PC-9 (cell line): ENCODE measurements at regions of chr5 and their contacts with region 1.

Region 1: GRCh38 chr5:142548739-142549275 is 137.1 kb downstream of the FGF1 start:
- DNase-seq: peak; percentile 73 to 80
- H3K4me3 ChIP-seq: no peak overlapping the region
- H3K27ac ChIP-seq: peak overlapping the region; percentile 48
- H3K4me1 ChIP-seq: peaks cover 43% of the 10 kb centered on the region
- H3K27me3 ChIP-seq: no peaks in the 10 kb centered on the region
- CTCF ChIP-seq: peak; percentile 93

Region 2: GRCh38 chr5:141681695-141682641 is 866.8 kb before region 1 on chr5 and contains the start of gene ARAP3:
- CTCF ChIA-PET with region 1: no interaction called
- POLR2A ChIA-PET with region 1: no interaction called
- intact Hi-C with region 1: loop called (anchors 10 kb)
- DNase-seq: peak; percentile 74 to 84
- H3K4me3 ChIP-seq: peak within 1 kb of the TSS; percentile 68
- H3K27ac ChIP-seq: peak within 1 kb of the TSS; percentile 89
- H3K4me1 ChIP-seq: peaks cover 22% of the 10 kb centered on the region
- H3K27me3 ChIP-seq: no peaks in the 10 kb centered on the region
- CTCF ChIP-seq: no peak
- total RNA-seq, gene ARAP3: 25.8 and 28.0 TPM in 2 replicates

Region 3: GRCh38 chr5:142151436-142152383 is 397.1 kb before region 1 on chr5:
- CTCF ChIA-PET with region 1: interaction called, 3 read pairs
- POLR2A ChIA-PET with region 1: no interaction called
- intact Hi-C with region 1: loop called (anchors 1 kb)
- DNase-seq: peak; percentile 48 to 49
- H3K4me3 ChIP-seq: no peak overlapping the region
- H3K27ac ChIP-seq: no peak overlapping the region
- H3K4me1 ChIP-seq: peaks cover 9% of the 10 kb centered on the region; the same call in 1 of the 2 replicates
- H3K27me3 ChIP-seq: no peaks in the 10 kb centered on the region
- CTCF ChIP-seq: peak; percentile 92

Region 4: DNA sequence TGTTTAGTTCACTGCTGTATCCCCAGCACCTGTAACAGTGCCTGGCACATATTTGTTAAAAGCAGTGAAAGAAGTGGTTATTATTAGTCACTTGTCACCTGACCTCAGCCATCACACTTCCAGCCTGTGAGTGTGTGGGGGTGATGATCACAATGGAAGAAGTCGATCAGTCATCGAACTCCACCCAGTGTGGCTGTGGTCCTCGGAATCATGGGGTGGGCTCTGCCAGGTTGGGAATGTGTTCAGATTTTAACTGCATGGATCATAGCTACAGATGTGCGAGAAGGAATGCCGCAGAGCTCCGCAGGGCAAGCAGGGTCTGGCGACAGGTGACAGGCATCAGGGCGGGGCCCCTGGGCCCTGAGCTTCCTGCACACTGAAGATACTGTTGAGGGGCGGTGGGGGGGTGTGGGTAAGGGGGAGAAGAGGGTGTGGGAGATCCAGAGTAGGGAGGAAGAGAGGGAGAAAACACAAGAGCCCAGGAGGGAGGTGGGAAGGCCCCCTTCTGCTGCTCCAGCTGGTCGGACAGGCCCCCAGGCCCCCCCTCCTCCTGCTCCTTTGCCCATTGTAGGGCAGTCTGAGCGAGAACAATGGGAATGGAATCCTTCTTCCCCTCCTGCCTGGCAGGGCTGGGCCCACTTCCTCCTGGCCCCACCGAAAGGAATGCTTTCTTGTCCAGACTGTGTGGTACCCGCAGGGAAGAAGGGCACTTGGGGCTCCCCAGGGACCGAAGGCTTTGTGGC is 313.6 kb before region 1 on chr5:
- CTCF ChIA-PET with region 1: no interaction called
- POLR2A ChIA-PET with region 1: no interaction called
- intact Hi-C with region 1: loop called (anchors 5 kb)
- DNase-seq: peak; percentile 57 to 82
- H3K4me3 ChIP-seq: peak overlapping the region; percentile 17; the same call in 1 of the 2 replicates
- H3K27ac ChIP-seq: no peak overlapping the region; the same call in 1 of the 2 replicates
- H3K4me1 ChIP-seq: peaks cover 45% of the 10 kb centered on the region
- H3K27me3 ChIP-seq: no peaks in the 10 kb centered on the region
- CTCF ChIP-seq: no peak

Region 5: GRCh38 chr5:142446131-142446959 is 102.5 kb before region 1 on chr5:
- CTCF ChIA-PET with region 1: no interaction called
- POLR2A ChIA-PET with region 1: no interaction called
- intact Hi-C with region 1: loop called (anchors 2 kb)
- DNase-seq: peak; percentile 32 to 90
- H3K4me3 ChIP-seq: peak overlapping the region; percentile 33; the same call in 1 of the 2 replicates
- H3K27ac ChIP-seq: peak overlapping the region; percentile 99
- H3K4me1 ChIP-seq: peaks cover 57% of the 10 kb centered on the region
- H3K27me3 ChIP-seq: no peaks in the 10 kb centered on the region
- CTCF ChIP-seq: no peak

Region 6: DNA sequence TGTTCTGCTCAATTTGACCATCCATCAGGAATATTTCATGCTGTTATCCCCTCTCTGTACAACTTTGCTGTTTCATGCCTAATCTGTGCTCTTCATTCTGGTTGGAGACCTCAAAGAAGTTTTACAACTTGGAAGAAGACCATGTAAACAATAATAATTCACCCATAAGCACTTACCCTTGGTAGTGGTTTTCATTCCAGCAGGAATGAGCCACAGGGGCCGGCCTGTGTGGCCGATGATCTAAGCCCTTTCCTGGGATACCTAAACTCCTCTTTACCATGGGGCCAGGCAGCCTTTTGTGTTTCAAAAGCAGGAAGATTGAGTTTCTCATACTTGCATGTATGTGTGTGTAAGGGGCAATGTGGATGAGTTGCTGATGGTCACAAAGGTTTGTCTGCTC is 27.9 kb before region 1 on chr5:
- CTCF ChIA-PET with region 1: no interaction called
- POLR2A ChIA-PET with region 1: no interaction called
- intact Hi-C with region 1: no loop called
- DNase-seq: no peak
- H3K4me3 ChIP-seq: no peak overlapping the region
- H3K27ac ChIP-seq: peak overlapping the region; percentile 22; the same call in 1 of the 2 replicates
- H3K4me1 ChIP-seq: peaks cover 12% of the 10 kb centered on the region
- H3K27me3 ChIP-seq: no peaks in the 10 kb centered on the region
- CTCF ChIP-seq: no peak

Region 7: GRCh38 chr5:142587354-142587965 is 38.7 kb after region 1 on chr5:
- CTCF ChIA-PET with region 1: no interaction called
- POLR2A ChIA-PET with region 1: no interaction called
- intact Hi-C with region 1: no loop called
- DNase-seq: peak; percentile 8 to 45
- H3K4me3 ChIP-seq: no peak overlapping the region
- H3K27ac ChIP-seq: no peak overlapping the region
- H3K4me1 ChIP-seq: no peaks in the 10 kb centered on the region
- H3K27me3 ChIP-seq: no peaks in the 10 kb centered on the region
- CTCF ChIP-seq: peak; percentile 55

Region 8: GRCh38 chr5:142699184-142699720 is 150.4 kb after region 1 on chr5:
- CTCF ChIA-PET with region 1: no interaction called
- POLR2A ChIA-PET with region 1: no interaction called
- intact Hi-C with region 1: loop called (anchors 1 kb)
- DNase-seq: peak; percentile 73 to 80
- H3K4me3 ChIP-seq: no peak overlapping the region
- H3K27ac ChIP-seq: no peak overlapping the region
- H3K4me1 ChIP-seq: peaks cover 12% of the 10 kb centered on the region
- H3K27me3 ChIP-seq: no peaks in the 10 kb centered on the region
- CTCF ChIP-seq: peak; percentile 98